BJ (cell line): ENCODE measurements at regions of chr17 and their contacts with region 1.

Region 1: GRCh38 chr17:40290629-40291287 is 3.1 kb downstream of the CDC6 start:
- DNase-seq: peak; percentile 81
- H3K4me3 ChIP-seq: no peak overlapping the region
- H3K27me3 ChIP-seq: no peaks in the 10 kb centered on the region
- CTCF ChIP-seq: peak; percentile 67

Region 2: DNA sequence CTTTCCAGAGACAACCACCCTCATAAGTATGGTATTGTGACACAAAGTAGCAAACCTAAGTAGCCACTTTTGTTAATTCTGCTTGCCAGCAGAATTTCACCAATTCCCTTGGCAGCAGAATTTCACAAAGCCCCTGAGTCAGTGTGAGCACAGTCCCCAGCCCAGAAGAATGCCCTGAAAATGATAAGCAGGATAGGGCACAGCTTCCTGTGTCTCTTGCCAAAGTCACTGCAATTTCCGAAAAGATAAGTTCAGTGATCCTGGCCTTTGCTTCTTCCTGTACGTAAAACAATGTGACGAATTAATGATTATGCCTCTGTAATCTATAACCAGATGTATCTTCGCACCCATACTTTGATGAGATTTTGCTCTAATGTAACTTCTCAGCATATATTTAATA is 87.6 kb before region 1 on chr17:
- CTCF ChIA-PET with region 1: interaction called, 39 read pairs
- POLR2A ChIA-PET with region 1: no interaction called
- DNase-seq: no peak
- H3K4me3 ChIP-seq: no peak overlapping the region
- H3K27me3 ChIP-seq: no peaks in the 10 kb centered on the region
- CTCF ChIP-seq: no peak

Region 3: GRCh38 chr17:40209404-40210093 is 81.2 kb before region 1 on chr17:
- CTCF ChIA-PET with region 1: interaction called, 18 read pairs
- POLR2A ChIA-PET with region 1: no interaction called
- DNase-seq: peak; percentile 87
- H3K4me3 ChIP-seq: no peak overlapping the region
- H3K27me3 ChIP-seq: no peaks in the 10 kb centered on the region
- CTCF ChIP-seq: no peak